ENCODE measurements at regions of chr4 and their contacts with region 1.

Region 1: GRCh38 chr4:40289366-40290188 is 45.6 kb upstream of the CHRNA9 start:
- DNase-seq: peak in 1 of 2 donors; percentile 66
- H3K4me3 ChIP-seq: no peak overlapping the region
- H3K27ac ChIP-seq: peak overlapping the region in 3 of 5 donors; percentile 5 to 44 (median 16)
- H3K4me1 ChIP-seq: peaks cover 0 to 16% (median 4%) of the 10 kb centered on the region in 4 donors
- H3K27me3 ChIP-seq: no peaks in the 10 kb centered on the region
- CTCF ChIP-seq: no peak
- EP300 ChIP-seq: no peak
- POLR2A ChIP-seq: no peak

Region 2: DNA sequence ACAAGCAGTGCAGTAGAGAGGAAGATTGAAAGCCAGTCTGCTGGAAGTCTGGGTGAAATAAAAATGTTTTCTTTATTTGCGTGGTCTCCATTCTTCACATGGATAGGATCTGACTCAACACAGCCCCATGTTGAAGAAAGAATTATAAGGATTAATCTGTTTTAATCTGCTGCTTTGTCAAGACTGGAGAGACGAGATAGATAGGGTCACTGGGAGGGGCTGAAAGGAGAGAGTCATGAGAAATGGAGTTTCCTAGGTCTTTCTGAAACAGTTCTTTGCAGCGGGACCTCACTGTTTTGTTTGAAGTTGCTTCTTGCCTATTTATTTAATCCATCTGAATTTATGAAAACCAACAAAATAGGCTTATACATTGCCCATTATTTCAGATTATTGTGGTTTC is 125.1 kb before region 1 on chr4:
- intact Hi-C with region 1: loop called (anchors 10 kb)
- DNase-seq: no peak
- H3K4me3 ChIP-seq: no peak overlapping the region
- H3K27ac ChIP-seq: no peak overlapping the region
- H3K4me1 ChIP-seq: no peaks in the 10 kb centered on the region
- H3K27me3 ChIP-seq: no peaks in the 10 kb centered on the region
- CTCF ChIP-seq: no peak
- EP300 ChIP-seq: no peak
- POLR2A ChIP-seq: no peak

Region 3: GRCh38 chr4:40887288-40888131 is 597.9 kb after region 1 on chr4:
- intact Hi-C with region 1: no loop called
- DNase-seq: peak in 1 of 2 donors; percentile 49
- H3K4me3 ChIP-seq: no peak overlapping the region
- H3K27ac ChIP-seq: no peak overlapping the region
- H3K4me1 ChIP-seq: no peaks in the 10 kb centered on the region
- H3K27me3 ChIP-seq: no peaks in the 10 kb centered on the region
- CTCF ChIP-seq: no peak
- EP300 ChIP-seq: no peak
- POLR2A ChIP-seq: no peak